ENCODE measurements at regions of chr22 and their contacts with region 1.

Region 1: GRCh38 chr22:49838771-49839717 is 11.4 kb upstream of the BRD1 start:
- DNase-seq: peak; percentile 80
- ATAC-seq: peak; percentile 96
- H3K4me3 Mint-ChIP-seq: peak overlapping the region; percentile 83
- H3K27ac Mint-ChIP-seq: peak overlapping the region; percentile 83
- H3K4me1 Mint-ChIP-seq: peaks cover 20% of the 10 kb centered on the region
- H3K27me3 Mint-ChIP-seq: peaks cover 6% of the 10 kb centered on the region

Region 2: DNA sequence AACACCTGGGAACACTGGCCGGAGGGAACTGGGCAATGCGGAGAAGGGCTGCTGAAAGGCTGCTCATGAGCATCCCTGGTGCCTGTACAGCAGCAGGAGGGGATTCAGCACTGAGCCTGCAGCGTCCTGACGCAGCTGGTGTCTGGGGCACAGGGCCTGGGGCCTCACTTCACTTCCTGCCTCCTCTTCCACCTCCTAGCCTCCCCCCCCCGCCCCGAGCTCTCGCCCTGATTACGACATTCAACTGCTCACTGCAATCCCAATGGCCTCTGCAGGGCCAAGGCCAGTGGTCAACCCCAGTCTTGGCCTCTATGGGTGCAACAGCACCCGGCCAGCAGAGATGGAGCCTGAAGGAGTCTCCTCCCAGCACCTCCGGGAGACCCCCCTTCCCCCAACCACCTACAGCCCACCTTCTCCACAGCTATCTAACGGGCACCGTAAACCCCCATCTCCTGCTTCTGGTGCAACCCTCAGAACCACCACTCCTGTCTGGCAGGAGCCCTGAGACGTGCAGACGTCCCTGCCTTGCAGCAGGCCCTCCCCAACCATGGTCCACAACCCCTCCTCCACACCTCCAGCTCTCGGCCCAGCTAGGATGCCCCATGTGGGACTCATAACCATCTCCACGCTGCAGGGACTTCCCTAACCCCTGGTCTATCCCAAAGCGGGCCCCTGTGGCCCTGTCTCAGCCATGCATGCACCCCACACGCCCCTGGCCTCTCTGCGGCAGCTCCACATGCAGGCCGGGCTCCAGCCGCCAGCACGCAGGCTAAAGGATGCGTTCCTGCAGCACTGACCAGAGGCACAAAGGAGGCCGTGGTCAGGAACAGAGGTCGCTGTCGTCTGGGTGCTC is 49.5 kb before region 1 on chr22:
- POLR2A ChIA-PET with region 1: interaction called, 13 read pairs
- DNase-seq: peak; percentile 59
- ATAC-seq: peak; percentile 87
- H3K4me3 Mint-ChIP-seq: peak overlapping the region; percentile 72
- H3K27ac Mint-ChIP-seq: peak overlapping the region; percentile 94
- H3K4me1 Mint-ChIP-seq: peaks cover 31% of the 10 kb centered on the region
- H3K27me3 Mint-ChIP-seq: no peaks in the 10 kb centered on the region

Region 3: DNA sequence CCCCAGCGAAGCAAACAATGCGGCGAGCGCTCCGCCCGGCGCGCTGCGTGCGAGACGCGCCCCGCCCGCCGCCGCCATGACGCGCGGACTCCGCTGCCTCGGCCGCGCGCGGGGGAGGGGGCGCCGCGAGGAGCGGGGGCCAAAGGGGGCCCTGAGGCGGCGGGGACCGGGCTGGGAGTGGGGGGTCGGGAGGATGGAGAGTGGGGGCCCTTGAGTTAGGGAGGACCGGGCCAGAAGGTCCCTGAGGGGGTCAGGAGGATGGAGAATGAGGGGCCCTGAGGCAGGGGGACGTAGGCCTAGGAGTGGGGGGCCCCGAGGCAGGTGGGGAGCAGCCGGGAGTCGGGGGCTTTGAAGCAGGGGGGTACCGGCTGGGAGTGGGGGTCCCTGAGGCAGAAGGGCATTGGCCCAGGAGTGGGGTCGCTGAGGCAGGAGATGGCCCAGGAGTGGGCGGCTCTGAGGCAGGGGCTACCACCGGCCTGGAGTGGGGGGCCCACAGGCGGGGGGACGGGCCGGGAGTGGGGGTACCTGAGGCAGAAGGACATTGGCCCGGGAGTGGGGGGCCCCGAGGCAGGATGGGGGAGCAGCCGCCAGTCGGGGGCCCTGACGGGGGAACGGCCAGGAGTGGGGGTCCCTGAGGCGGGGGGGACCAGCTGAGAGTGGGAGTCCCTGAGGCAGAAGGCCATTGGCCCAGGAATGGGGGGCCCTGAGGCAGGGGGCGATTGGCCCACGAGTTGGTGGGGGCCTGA is 11.0 kb before region 1 on chr22 and contains the start of gene BRD1:
- POLR2A ChIA-PET with region 1: interaction called, 27 read pairs
- DNase-seq: peak; percentile 81
- ATAC-seq: peak; percentile 61
- H3K4me3 Mint-ChIP-seq: peak within 1 kb of the TSS; percentile 87
- H3K27ac Mint-ChIP-seq: peak within 1 kb of the TSS; percentile 90
- H3K4me1 Mint-ChIP-seq: peaks cover 30% of the 10 kb centered on the region
- H3K27me3 Mint-ChIP-seq: no peaks in the 10 kb centered on the region
- total RNA-seq, gene BRD1: 56.7 to 56.9 TPM

Region 4: DNA sequence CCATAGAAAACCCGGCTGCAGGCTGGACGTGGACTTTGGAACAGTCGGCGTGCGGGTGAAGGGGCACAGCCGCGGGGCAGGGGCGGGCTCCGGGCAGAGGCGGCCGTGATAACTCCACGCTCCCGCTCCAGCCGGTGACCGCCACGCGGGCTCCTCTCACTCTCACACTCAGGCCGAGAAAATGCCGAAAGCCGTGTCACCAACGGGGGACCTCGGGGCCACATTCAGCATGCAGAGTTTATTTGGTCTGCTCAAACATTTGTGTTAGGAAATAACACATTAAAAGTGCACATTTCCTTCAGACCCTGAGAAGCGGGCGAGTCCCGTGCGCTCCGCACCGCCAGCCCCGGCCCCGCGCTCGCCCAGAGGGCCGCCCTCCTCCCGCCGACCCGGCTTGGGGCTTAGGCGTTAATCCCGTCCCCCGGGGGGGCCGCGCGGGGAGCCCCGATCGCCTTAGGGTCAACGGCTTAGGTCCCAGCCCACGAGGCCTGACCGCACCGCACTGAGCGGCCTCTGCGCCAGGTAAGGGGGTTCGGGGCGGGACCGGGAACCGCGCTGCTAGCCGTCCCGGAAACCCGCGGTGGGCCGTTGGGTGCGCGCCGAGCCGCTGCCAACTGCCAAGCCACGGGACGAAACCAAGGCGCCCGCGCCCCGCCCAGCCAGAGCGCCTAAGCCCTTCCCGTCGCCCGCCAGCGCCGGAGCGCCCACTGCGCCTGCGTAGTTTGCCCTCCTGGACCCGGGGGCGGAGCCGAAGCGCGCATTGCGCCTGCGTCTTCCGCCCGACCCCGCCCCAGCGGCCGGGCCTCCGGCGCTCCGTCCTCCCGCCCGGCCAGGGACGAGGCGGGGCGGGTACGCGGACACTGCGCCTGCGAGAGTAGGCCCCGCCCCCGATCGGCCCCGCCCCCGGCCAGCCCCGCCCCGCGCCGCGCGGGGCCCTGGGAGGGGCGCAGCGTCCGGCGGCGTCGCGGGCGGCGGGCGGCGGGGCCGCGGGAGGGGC is 14.2 kb after region 1 on chr22 and contains the start of gene ZBED4:
- POLR2A ChIA-PET with region 1: interaction called, 11 read pairs
- DNase-seq: peak; percentile 100
- ATAC-seq: peak; percentile 83
- H3K4me3 Mint-ChIP-seq: peak within 1 kb of the TSS; percentile 93
- H3K27ac Mint-ChIP-seq: peak within 1 kb of the TSS; percentile 90
- H3K4me1 Mint-ChIP-seq: peaks cover 27% of the 10 kb centered on the region
- H3K27me3 Mint-ChIP-seq: peaks cover 16% of the 10 kb centered on the region
- total RNA-seq, gene ZBED4: 21.0 to 21.5 TPM

Region 5: DNA sequence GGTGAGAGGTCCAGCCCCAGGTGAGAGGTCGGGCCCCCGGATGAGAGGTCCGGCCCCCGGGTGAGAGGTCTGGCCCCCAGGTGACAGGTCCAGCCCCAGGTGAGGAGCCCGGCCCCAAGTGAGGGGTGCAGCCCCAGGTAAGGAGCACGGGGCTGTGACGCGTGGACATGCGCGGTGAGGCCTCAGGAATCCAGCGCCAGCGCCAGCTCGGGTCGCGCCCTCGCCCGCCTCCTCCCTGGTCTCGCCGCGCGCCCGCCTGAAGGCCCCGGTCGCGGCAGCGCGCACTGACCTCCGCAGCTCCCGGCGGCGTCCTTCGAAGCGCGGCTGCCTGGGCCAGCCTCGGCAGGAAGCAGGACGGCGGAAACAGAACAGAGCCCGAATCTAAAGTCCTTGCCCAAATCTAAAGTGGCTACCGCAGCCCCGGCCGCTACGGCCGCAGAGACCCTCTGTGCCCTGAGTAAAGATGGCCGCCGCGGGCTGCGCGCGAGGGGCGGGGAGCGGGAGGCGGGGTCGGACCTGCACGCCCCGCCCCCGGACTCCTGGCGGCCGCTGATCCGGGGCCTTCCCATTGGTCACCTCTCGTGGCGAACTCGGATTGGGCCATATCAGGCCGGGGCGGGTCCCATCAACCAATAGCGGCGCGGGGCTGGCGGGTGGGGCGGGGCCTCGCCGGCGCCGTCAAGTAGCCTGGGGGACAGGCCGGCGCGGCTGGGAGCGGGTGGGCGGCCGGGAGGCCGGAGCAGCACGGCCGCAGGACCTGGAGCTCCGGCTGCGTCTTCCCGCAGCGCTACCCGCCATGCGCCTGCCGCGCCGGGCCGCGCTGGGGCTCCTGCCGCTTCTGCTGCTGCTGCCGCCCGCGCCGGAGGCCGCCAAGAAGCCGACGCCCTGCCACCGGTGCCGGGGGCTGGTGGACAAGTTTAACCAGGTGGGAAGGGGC is 79.2 kb after region 1 on chr22 and contains the starts of genes ALG12 and CRELD2:
- POLR2A ChIA-PET with region 1: no interaction called
- DNase-seq: peak; percentile 97
- ATAC-seq: peak; percentile 98
- H3K4me3 Mint-ChIP-seq: peak within 1 kb of the TSS; percentile 87
- H3K27ac Mint-ChIP-seq: peak within 1 kb of the TSS; percentile 85
- H3K4me1 Mint-ChIP-seq: peaks cover 7% of the 10 kb centered on the region
- H3K27me3 Mint-ChIP-seq: no peaks in the 10 kb centered on the region
- total RNA-seq, gene ALG12: 18.0 to 20.2 TPM
- total RNA-seq, gene CRELD2: 40.3 to 41.0 TPM